Activated CD4-positive, alpha-beta memory T cell treated with anti-CD3 and anti-CD28 coated beads, Interleukin-2, amount 10 ng/mL, durations not matched to agents 7 days and 5 days (primary cell): ENCODE measurements at regions of chr11 and their contacts with region 1.

Region 1: GRCh38 chr11:86869966-86870570 is 69.7 kb downstream of the PRSS23 start:
- DNase-seq: peak; percentile 55
- H3K4me3 Mint-ChIP-seq: no peak overlapping the region
- H3K27ac Mint-ChIP-seq: no peak overlapping the region
- H3K4me1 Mint-ChIP-seq: no peaks in the 10 kb centered on the region
- H3K27me3 Mint-ChIP-seq: peaks cover 25% of the 10 kb centered on the region

Region 2: DNA sequence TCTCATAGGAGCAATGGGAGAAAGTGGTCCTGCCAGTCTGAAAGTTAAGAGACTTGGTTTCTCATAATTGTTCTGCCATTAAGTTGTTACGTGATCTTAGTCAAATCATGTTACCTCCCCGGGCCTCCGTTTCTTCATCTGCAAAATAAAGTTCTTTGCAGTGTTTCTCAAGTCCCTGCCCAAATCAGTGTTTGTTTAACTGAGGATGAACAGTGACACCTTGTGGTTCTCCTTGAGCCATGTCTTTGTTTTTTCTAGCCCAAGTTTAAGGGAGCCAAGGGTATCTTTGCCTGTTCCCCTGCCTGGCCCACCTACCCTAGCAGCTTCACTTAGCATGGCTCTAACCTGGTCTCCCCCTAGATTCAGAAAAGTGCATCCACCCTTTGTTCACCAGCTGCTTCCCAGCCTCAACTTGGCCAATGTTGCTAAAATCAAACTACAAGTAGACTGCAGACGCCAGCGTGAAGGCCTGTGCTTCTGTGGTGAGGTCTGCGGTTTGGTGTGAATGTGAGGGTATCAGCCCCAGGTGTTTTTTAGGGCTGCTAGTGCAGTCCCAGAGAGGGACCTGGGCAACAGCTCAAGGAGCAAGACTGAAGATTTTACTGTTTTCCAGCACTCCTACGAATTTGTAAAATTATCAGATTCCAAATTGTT is 49.6 kb after region 1 on chr11:
- CTCF ChIA-PET with region 1: interaction called, 56 read pairs
- POLR2A ChIA-PET with region 1: interaction called, 3 read pairs
- DNase-seq: no peak
- H3K4me3 Mint-ChIP-seq: no peak overlapping the region
- H3K27ac Mint-ChIP-seq: no peak overlapping the region
- H3K4me1 Mint-ChIP-seq: peaks cover 16% of the 10 kb centered on the region
- H3K27me3 Mint-ChIP-seq: peaks cover 23% of the 10 kb centered on the region

Region 3: DNA sequence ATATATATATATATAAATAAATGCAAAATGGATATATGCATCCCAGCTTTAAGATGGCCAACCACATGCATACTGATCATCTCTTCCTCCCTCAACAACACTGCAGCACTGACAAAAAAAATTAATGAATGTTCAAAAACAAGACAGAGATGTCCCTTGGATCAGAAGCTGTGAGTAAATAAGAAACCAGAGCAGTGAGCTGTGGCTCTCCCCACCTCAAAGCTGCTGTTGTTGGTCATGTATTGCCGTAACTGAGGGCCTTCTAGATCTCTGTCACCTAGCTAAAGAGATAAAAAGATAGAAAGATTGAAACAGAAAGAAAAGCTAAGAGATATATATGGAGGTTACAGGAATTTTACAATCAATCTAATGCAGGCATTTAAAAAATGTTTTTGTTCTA is 152.2 kb after region 1 on chr11:
- CTCF ChIA-PET with region 1: no interaction called
- POLR2A ChIA-PET with region 1: no interaction called
- DNase-seq: peak; percentile 36
- H3K4me3 Mint-ChIP-seq: no peak overlapping the region
- H3K27ac Mint-ChIP-seq: no peak overlapping the region
- H3K4me1 Mint-ChIP-seq: peaks cover 22% of the 10 kb centered on the region
- H3K27me3 Mint-ChIP-seq: peaks cover 3% of the 10 kb centered on the region